ENCODE measurements at regions of chr11 and their contacts with region 1.

Region 1: GRCh38 chr11:118901494-118902335 is 18.0 kb downstream of the CXCR5 start:
- DNase-seq: peak in 1 of 10 donors; percentile 40
- H3K4me3 ChIP-seq: no peak overlapping the region
- H3K27ac ChIP-seq: peak overlapping the region in 1 of 59 donors; percentile 81
- H3K27me3 ChIP-seq: no peaks in the 10 kb centered on the region
- CTCF ChIP-seq: no peak

Region 2: DNA sequence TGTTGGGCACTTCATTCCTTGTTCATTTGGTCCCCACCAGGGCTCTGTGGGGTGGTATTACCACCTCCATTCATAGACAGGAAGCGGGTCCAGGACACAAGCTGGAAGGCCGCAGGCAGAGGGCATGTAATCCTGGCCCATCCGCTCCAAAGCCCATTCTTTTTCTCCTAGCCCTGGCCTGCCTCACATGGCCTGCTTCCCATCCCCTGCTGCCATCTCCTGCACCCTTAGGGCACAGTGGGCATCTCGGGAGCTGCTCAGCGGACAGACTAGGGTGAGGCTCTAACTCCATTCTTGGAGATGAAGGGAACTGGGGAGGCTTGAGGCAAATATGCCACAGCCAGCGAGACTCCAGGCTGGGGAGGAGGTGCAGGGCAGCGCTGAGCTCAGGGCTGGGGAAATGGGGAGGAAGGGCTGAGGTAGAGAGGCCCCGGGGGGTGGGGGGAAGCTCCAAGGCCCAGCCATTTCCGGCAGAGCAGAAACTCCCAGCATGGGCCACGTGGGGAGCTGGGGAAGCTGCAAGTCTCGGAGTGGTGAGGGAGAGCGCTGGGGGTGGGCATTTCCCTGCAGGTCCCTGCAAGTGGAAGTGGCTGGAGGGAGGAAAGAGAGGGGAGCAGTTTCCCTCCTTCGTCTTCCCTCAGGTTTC is 38.4 kb after region 1 on chr11:
- intact Hi-C with region 1: loop called in 1 of 2 experiments (anchors 5 kb)
- DNase-seq: peak in 1 of 10 donors; percentile 16
- H3K4me3 ChIP-seq: no peak overlapping the region
- H3K27ac ChIP-seq: peak overlapping the region in 5 of 59 donors; percentile 16 to 44 (median 36)
- H3K27me3 ChIP-seq: no peaks in the 10 kb centered on the region
- CTCF ChIP-seq: no peak

Measured in dorsolateral prefrontal cortex (tissue), 120 donors.